Activated CD4-positive, alpha-beta T cell treated with anti-CD3 and anti-CD28 coated beads for 36 hours (primary cell): ENCODE measurements at regions of chr20 and their contacts with region 1.

Region 1: DNA sequence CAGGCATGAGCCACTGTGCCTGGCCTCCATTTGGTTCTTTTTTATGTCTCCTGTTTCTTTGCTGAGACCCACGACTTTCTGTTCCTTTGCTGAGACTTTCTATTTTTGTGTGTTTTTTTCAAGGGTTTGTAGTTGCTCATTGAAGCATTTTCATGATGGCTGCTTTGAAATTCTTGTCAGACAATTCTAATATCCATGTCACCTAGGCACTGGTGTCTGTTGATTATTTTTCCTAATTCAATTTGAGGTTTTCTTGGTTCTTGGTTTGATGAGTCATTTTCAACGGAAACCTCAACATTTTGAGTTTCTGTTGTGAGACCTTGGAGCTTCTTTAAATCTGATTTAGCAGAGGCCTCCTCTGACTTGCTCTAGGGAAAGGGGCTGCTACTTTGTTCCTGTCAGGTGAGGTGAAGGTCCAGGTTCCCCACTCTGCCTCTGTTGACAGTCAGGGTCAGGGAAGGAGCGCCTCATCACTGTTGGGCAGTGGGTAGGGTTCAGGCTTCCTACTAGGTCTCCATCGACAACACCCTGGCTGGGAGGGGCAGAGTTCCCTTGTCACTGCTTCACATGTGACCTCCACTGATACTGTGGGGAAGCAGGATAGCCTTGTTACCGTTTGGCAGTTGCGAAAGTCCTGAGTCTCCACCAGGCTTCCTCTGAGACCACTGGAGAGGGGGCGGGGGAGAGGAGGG is 67.2 kb upstream of the RNF24 start:
- DNase-seq: peak; percentile 69
- ATAC-seq: peak; percentile 78
- H3K4me3 Mint-ChIP-seq: peak overlapping the region; percentile 9
- H3K27ac Mint-ChIP-seq: peak overlapping the region; percentile 87
- H3K4me1 Mint-ChIP-seq: peaks cover 41% of the 10 kb centered on the region
- H3K27me3 Mint-ChIP-seq: peaks cover 5% of the 10 kb centered on the region

Region 2: GRCh38 chr20:3786665-3787323 is 295.8 kb before region 1 on chr20 and contains the start of gene CENPB:
- CTCF ChIA-PET with region 1: no interaction called
- POLR2A ChIA-PET with region 1: no interaction called
- intact Hi-C with region 1: loop called (anchors 1 to 10 kb)
- DNase-seq: peak; percentile 95
- ATAC-seq: peak; percentile 89
- H3K4me3 Mint-ChIP-seq: peak within 1 kb of the TSS; percentile 77
- H3K27ac Mint-ChIP-seq: peak within 1 kb of the TSS; percentile 84
- H3K4me1 Mint-ChIP-seq: peaks cover 39% of the 10 kb centered on the region
- H3K27me3 Mint-ChIP-seq: no peaks in the 10 kb centered on the region
- total RNA-seq, gene CENPB: 46.2 to 48.3 TPM

Region 3: GRCh38 chr20:3911956-3912355 is 170.6 kb before region 1 on chr20:
- CTCF ChIA-PET with region 1: interaction called, 3 read pairs
- POLR2A ChIA-PET with region 1: no interaction called
- intact Hi-C with region 1: loop called in 1 of 2 experiments (anchors 5 kb)
- DNase-seq: no peak
- ATAC-seq: no peak
- H3K4me3 Mint-ChIP-seq: no peak overlapping the region
- H3K27ac Mint-ChIP-seq: peak overlapping the region; percentile 2
- H3K4me1 Mint-ChIP-seq: peaks cover 45% of the 10 kb centered on the region
- H3K27me3 Mint-ChIP-seq: no peaks in the 10 kb centered on the region

Region 4: GRCh38 chr20:4067600-4068261 is 14.8 kb before region 1 on chr20:
- CTCF ChIA-PET with region 1: interaction called, 16 read pairs
- POLR2A ChIA-PET with region 1: no interaction called
- intact Hi-C with region 1: no loop called
- DNase-seq: no peak
- ATAC-seq: peak; percentile 39
- H3K4me3 Mint-ChIP-seq: no peak overlapping the region
- H3K27ac Mint-ChIP-seq: no peak overlapping the region
- H3K4me1 Mint-ChIP-seq: peaks cover 13% of the 10 kb centered on the region
- H3K27me3 Mint-ChIP-seq: no peaks in the 10 kb centered on the region